ENCODE measurements at regions of chr7 and their contacts with region 1.

Region 1: GRCh38 chr7:81499262-81500116 is 270.4 kb downstream of the HGF start:
- DNase-seq: no peak
- ATAC-seq: peak; percentile 74

Region 2: DNA sequence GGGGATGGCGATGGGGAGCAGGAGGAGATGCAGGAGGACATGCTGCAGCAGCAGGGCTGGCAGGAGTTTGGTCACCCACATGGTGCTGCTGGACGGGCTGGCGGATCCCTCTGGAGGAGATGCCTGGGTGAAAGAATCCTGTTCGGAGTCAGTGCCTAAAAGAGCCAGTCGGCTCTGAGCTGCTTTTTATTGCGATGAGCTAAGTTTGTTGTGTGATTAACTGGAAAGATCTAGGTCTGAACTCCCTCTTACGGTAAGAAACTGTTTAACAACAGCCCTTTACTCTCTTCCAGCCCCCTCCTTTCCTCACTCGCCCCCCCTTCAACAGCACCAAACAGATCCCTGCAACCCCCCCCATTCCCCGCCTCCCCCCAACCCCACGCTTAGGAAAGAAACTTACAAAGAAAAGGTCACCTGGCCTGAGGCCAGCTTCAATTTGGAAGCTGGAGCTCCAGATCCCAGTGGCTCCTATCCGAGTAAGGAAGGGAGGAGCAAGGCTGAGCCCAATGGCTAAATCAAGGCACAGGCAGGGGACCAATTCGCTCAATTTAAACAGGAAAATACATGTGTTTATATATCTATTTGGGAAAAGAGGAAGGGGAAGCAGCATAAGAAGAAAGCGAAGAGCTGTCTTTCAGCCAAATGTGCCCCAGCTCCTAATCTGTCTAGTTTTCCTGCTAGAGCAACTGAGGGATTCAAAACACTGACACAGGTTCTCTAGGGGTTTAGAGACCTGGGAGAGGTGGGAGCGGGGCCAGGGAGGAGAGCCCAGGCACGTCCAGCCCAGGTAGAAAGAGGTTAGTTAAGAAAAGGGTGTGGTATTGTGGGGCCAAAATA is 270.6 kb after region 1 on chr7 and contains the start of gene HGF:
- intact Hi-C with region 1: no loop called
- DNase-seq: peak; percentile 30 to 33
- ATAC-seq: no peak
- total RNA-seq, gene HGF: 0.98 to 3.2 TPM

Region 3: DNA sequence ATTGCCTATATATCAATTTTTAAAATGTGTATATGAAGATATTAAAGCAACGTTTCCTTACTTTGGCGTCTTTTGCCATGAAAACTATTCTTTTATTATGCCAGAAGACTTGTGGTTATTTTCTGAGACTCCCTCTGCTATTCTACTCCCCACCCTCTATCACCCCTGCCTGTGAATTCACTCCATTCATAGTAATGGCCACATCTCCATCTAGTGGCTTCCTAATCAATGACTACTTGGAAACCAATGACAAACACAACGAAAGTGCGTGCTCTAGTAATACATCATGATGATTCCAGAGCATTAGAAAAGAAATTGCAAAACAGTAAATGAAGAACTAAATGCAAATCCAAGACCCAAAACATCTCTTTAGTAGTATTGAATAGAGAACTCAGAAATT is 457.0 kb after region 1 on chr7:
- intact Hi-C with region 1: loop called in 1 of 2 experiments (anchors 10 kb)
- DNase-seq: no peak
- ATAC-seq: no peak

Region 4: DNA sequence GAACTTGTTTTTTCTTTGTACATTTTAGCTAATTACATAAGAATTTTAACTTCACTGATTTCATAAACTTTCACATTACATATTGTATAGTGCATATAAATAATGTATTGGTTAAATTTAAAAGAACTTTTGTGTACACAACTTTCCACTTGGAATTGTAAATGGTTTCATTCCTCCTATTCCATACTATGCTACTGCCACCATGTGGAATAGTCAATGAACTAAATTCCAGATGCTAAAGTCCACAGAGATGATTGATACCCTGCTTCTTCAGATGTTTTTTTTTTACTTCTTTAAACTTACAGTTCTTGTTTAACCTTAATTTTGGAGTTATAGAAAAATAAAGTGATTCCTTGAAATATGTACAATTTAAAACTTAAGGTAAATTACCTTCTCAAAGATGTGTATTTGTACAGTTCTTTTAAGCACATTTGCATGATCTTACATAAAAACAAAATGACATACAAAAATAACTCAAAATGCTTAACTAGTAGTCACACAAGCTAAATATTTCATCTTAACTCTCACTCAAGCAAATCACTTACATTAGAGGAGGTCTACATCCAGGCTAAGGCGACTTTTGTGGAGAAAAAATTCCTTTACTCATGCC is 518.0 kb after region 1 on chr7:
- intact Hi-C with region 1: loop called in 1 of 2 experiments (anchors 10 kb)
- DNase-seq: no peak
- ATAC-seq: peak; percentile 44